Mammary epithelial cell (primary cell): ENCODE measurements at regions of chr17 and their contacts with region 1.

Region 1: GRCh38 chr17:57597531-57598453 is 147.3 kb downstream of the CCDC182 start:
- DNase-seq: peak; percentile 49
- H3K4me3 ChIP-seq: no peak overlapping the region
- H3K27ac ChIP-seq: no peak overlapping the region
- H3K4me1 ChIP-seq: peaks cover 2% of the 10 kb centered on the region
- H3K27me3 ChIP-seq: no peaks in the 10 kb centered on the region
- CTCF ChIP-seq: peak; percentile 83 to 85

Region 2: GRCh38 chr17:57243171-57243948 is 354.4 kb before region 1 on chr17:
- CTCF ChIA-PET with region 1: no interaction called
- dilution Hi-C with region 1: no loop called
- in situ Hi-C with region 1: no loop called
- intact Hi-C with region 1: loop called (anchors 1 kb)
- DNase-seq: peak; percentile 45
- H3K4me3 ChIP-seq: no peak overlapping the region
- H3K27ac ChIP-seq: no peak overlapping the region
- H3K4me1 ChIP-seq: no peaks in the 10 kb centered on the region
- H3K27me3 ChIP-seq: no peaks in the 10 kb centered on the region
- CTCF ChIP-seq: peak; percentile 100

Region 3: DNA sequence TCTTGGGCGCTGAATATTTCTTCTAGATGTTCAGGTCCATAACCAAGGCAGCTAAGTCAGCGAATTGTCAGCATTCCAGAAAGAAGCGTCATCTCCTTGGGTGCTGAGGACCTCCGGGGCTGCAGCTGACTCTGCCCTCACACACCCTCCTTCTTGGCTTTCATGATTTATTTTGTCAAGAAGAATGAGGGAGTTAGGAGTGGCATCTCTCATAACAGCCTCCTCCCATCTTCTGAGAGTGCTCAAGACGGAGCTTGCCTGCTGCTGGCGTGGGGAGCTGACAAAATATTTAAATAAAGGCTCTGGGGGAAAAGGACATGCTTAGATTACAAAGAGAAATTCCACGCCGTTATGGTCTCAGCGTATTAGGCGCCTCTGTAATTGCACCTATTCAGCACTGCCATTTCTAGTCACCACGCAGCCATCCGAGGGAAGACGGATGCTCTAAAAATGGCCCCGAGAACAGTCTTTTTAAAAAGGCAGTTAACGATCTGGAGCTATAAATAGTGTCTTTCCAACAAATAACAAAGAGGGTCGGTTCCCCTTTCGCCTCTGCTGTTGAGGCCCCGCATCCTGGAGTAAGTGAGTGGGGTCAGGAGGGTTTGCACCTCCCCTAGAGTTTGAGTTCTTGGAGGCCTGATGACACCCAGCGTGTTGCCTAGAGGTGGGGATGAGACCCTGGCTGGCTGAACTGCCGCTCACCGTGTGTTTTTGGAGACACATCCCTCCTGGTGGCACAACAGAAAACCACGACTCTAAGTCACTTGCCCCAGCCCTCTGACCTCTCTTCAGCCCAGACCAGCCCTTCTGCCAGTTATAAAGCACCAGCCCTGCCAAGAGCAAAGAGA is 39.7 kb before region 1 on chr17:
- CTCF ChIA-PET with region 1: no interaction called
- dilution Hi-C with region 1: loop called (anchors 5 kb)
- in situ Hi-C with region 1: no loop called
- intact Hi-C with region 1: no loop called
- DNase-seq: peak; percentile 74
- H3K4me3 ChIP-seq: no peak overlapping the region
- H3K27ac ChIP-seq: no peak overlapping the region
- H3K4me1 ChIP-seq: peaks cover 12% of the 10 kb centered on the region
- H3K27me3 ChIP-seq: no peaks in the 10 kb centered on the region
- CTCF ChIP-seq: no peak

Region 4: GRCh38 chr17:57739402-57740392 is 141.9 kb after region 1 on chr17:
- CTCF ChIA-PET with region 1: no interaction called
- dilution Hi-C with region 1: no loop called
- in situ Hi-C with region 1: loop called in 1 of 2 experiments (anchors 25 kb)
- intact Hi-C with region 1: loop called (anchors 1 kb)
- DNase-seq: peak; percentile 46
- H3K4me3 ChIP-seq: no peak overlapping the region
- H3K27ac ChIP-seq: no peak overlapping the region
- H3K4me1 ChIP-seq: no peaks in the 10 kb centered on the region
- H3K27me3 ChIP-seq: no peaks in the 10 kb centered on the region
- CTCF ChIP-seq: peak; percentile 49 to 70

Region 5: GRCh38 chr17:57833179-57833939 is 235.6 kb after region 1 on chr17:
- CTCF ChIA-PET with region 1: no interaction called
- dilution Hi-C with region 1: no loop called
- in situ Hi-C with region 1: no loop called
- intact Hi-C with region 1: loop called (anchors 1 kb)
- DNase-seq: peak; percentile 41
- H3K4me3 ChIP-seq: peak overlapping the region in 1 of 3 experiments; percentile 25
- H3K27ac ChIP-seq: no peak overlapping the region
- H3K4me1 ChIP-seq: peaks cover 4% of the 10 kb centered on the region
- H3K27me3 ChIP-seq: no peaks in the 10 kb centered on the region
- CTCF ChIP-seq: peak; percentile 90 to 97